ENCODE measurements at regions of chr22 and their contacts with region 1.

Region 1: GRCh38 chr22:38872172-38872830 is at the start of gene CBX6:
- DNase-seq: peak; percentile 89 to 99
- H3K4me3 ChIP-seq: peak within 1 kb of the TSS; percentile 43
- CTCF ChIP-seq: no peak
- POLR2A ChIP-seq: no peak
- total RNA-seq, gene CBX6: 5.1 to 20.0 (median 13.9) TPM

Region 2: GRCh38 chr22:38201710-38202436 is 670.4 kb before region 1 on chr22 and contains the start of gene MAFF:
- intact Hi-C with region 1: no loop called
- DNase-seq: peak; percentile 96 to 99
- H3K4me3 ChIP-seq: peak within 1 kb of the TSS; percentile 64
- CTCF ChIP-seq: no peak
- POLR2A ChIP-seq: peak in 1 of 2 donors; percentile 88
- total RNA-seq, gene MAFF: 64.7 to 116 (median 82.0) TPM

Region 3: DNA sequence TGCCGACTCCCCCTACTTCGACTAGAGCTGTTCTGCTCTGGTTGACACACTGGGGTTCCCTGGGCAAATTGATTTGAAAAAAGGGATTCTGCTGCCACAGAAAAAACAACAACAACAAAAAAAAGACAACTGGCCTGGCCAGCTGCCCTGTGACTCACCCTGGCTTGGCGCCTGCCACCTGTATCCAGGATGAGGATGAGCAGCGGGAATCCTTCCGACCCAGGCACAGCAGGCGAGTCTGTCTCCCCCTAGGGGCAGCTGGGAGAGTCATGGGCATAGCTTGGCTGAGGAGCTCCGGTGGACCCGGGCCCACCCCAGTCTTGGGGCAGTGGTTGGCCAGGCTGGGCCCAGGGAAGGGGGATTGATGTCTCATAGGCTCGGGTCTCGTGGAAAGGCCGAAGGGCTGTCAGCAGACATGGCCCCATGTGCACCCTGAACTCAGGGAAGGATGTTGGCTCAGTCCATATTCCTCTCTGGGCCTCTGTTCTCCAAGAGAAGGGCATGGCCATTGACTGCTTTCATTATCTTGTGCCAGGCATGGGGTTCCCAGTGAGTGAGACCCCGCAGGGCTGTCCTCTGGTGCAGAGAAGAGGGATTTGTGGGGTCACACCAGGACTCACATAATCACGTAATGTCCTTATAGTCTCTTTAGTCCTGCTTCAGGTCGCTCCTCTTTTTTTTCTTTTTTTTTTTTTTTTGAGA is 106.1 kb before region 1 on chr22:
- intact Hi-C with region 1: loop called (anchors 10 kb)
- DNase-seq: peak; percentile 47 to 91
- H3K4me3 ChIP-seq: no peak overlapping the region
- CTCF ChIP-seq: no peak
- POLR2A ChIP-seq: no peak

Region 4: DNA sequence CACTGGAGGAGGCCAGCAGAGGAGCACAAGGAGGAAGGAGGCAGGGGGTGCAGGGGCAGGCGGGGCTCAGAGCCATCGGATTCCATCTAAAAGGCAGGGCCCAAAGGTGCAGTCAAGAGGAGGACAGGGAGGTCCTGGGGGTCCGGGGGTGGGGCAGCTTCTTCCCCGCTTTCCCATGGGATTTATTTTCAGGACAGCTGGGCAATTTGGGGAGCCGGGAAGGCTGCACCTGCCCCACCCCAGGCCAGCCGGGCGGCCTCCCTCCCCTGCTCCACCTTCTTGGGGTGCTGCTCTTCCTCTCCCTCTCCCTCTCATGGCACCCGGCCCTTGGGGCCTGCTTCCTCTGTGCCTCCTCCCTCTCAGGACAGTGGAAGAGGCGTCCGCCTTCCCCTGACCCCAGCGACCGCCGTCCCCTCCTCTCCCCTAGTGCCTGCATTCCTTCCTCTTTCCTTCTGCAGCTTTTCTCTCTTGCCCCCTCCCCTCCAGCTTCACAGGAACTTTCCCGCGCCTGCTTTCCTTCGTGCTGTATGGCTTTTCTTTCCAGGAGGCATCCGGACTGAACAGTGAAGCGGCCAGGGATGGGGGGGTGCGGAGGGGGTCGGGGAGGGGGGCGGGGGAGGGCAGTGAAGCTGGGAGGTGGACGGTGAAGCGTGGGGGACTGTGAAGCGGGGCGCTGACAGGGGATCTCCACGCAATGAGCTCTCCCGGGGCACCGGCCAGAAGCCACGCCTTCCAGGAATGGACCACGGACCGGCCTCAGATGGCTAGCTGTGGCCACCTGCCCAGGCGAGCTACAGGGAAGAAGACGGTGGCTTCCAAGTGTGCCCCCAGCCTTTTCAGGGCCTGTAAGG is 251.7 kb after region 1 on chr22:
- intact Hi-C with region 1: loop called (anchors 10 kb)
- DNase-seq: no peak
- H3K4me3 ChIP-seq: no peak overlapping the region
- CTCF ChIP-seq: no peak
- POLR2A ChIP-seq: no peak

Region 5: DNA sequence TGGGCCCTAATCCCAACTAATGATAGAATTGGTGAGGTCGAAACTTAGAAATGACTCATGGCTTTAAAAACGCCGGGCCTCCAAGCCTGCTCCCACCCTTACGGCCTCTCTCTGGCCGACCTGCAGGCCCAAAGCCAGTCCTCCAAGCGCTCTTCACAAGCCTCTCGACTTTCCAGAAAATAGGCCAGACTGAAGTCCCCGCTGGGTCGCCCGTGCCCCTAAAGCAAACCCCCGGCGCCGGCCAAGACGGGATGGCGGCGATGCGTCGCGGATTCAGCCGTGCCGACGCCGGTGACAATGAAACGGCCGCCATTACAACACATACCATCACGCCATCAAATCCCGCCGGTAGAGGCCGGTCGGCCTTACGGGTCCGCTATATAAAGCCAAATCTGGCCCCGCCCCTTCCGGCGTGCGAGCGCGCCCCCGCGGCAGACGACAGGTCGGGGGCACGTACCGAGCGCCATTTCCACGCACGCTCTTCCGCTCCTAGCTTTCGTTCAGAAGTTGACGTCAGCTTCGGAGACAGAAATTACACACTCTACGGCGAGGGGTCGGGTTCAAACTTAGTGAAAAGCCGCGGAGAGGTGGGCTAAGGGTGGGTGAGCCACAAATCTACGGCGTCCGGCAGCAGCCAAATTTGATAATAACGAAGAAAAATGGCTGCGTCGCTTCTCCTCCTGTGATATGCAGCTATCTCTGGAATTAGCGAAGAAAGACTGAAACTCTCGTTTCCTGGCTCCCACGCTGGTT is 447.1 kb after region 1 on chr22 and contains the start of gene RPL3:
- intact Hi-C with region 1: loop called (anchors 5 kb)
- DNase-seq: peak; percentile 95 to 99
- H3K4me3 ChIP-seq: peak within 1 kb of the TSS; percentile 69
- CTCF ChIP-seq: no peak
- POLR2A ChIP-seq: peak in 1 of 2 donors; percentile 97
- total RNA-seq, gene RPL3: 2,414 to 3,362 (median 2,993) TPM

Measured in lower leg skin (tissue), 4 donors.